ENCODE measurements at regions of chr9 and their contacts with region 1.

Region 1: DNA sequence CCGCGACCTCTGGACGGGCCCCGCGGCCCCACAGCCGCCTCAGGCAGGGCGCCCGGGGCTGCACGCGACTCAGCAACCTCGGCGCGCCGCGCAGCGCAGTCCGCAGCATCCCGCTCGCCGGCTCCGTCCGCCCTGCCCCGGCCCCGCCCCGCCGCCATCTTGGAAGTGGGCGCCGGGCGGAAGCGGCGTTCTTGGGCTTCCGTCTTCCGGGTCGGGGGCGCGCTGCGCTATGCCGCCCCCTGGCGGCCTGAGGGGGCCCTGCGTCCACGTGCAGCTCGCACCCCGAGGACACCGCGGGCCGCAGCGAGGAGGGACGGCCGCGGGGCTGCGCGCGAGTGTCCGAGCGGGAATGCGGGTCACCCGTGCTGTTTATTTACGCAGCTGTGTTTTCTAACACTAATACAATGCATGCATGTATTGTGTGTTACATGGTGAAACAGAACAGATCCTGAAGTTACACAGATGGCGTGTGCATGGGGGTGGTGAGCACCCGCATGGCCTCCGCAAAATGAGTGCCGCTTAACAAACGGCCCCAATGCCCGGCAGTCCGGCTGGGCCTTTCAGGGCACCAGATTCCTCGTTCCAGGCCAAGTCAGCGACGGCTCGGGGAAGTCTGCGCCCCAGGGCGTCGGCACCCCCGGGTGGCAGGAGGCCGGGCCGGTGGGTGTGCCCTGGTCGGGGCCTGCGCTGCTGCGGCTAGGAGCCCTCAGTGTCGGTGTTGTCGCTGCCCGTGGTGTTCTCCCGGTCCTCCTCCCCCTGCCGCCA is at the start of gene DNLZ:
- DNase-seq: peak; percentile 84 to 95 (median 88)
- ATAC-seq: peak; percentile 11 to 61 (median 49)
- H3K4me3 ChIP-seq: peak within 1 kb of the TSS; percentile 60 to 98 (median 84)
- H3K27ac ChIP-seq: peak within 1 kb of the TSS; percentile 88 to 98 (median 96)
- H3K4me1 ChIP-seq: peaks cover 3 to 35% (median 22%) of the 10 kb centered on the region in 12 donors
- H3K27me3 ChIP-seq: no peaks in the 10 kb centered on the region
- CTCF ChIP-seq: peak; percentile 91 to 100 (median 98)
- POLR2A ChIP-seq: peak in 1 of 2 donors; percentile 58
- total RNA-seq, gene DNLZ: 21.3 to 67.8 (median 33.6) TPM

Region 2: GRCh38 chr9:136339173-136339957 is 24.4 kb before region 1 on chr9:
- intact Hi-C with region 1: loop called in 5 of 10 experiments (anchors 1 to 2 kb)
- DNase-seq: peak in 4 of 5 donors; percentile 65 to 85 (median 72)
- ATAC-seq: peak in 1 of 4 donors; percentile 34
- H3K4me3 ChIP-seq: no peak overlapping the region
- H3K27ac ChIP-seq: peak overlapping the region in 3 of 12 donors; percentile 2 to 94 (median 30)
- H3K4me1 ChIP-seq: peaks cover 0 to 46% (median 26%) of the 10 kb centered on the region in 12 donors
- H3K27me3 ChIP-seq: no peaks in the 10 kb centered on the region
- CTCF ChIP-seq: peak; percentile 80 to 92 (median 84)
- POLR2A ChIP-seq: no peak

Region 3: DNA sequence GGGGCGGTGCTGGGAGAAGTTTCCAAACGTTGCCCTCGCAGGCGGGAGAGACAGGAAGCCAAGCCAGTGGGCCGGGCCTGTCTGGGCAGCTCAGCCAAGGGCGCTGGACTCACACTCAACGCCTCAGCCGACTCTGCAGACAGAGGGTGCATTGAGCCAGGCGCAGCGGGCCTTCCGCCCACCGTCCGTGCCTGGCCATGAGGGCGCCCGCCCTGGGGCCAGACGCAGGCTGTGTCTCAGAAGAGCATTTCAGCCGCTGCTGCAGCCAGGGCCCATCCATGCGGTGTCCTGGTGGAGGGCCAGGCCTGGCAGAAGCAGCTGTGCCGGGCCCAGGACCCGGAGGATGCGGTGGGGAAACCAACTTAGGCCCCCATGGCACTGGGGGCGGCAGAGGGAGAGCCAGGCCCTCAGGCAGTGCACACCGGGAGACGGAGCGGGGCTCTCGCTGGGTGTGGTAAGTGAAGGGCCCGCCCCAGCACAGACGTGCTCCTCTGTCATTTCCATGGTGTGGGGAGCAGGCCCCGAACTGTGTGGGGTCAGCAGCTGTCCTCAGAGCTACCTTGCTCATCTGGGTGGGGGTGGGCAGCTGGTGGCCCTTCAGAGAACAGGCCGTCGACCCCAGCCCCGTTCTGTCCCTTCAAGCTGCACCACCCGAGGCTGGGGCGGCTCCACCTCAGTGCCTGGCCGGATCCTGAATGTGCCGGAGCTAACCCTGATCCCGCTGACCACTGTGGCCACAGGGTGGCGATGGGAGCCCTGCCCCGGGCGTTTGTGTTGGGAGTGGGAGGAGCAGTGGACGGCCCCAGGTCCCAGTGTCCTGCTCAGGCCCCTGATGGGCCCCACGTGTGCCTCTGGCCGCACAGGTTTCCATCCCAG is 18.3 kb before region 1 on chr9:
- intact Hi-C with region 1: loop called in 5 of 10 experiments (anchors 1 to 2 kb)
- DNase-seq: peak in 4 of 5 donors; percentile 68 to 85 (median 79)
- ATAC-seq: peak; percentile 39 to 57 (median 44)
- H3K4me3 ChIP-seq: peak overlapping the region in 9 of 12 donors; percentile 10 to 52 (median 24)
- H3K27ac ChIP-seq: peak overlapping the region; percentile 18 to 94 (median 64)
- H3K4me1 ChIP-seq: peaks cover 0 to 60% (median 42%) of the 10 kb centered on the region in 12 donors
- H3K27me3 ChIP-seq: no peaks in the 10 kb centered on the region
- CTCF ChIP-seq: peak in 11 of 12 donors; percentile 19 to 69 (median 53)
- POLR2A ChIP-seq: no peak

Measured in heart left ventricle (tissue), 16 donors.